ENCODE measurements at regions of chr7 and their contacts with region 1.

Region 1: GRCh38 chr7:5210751-5211338 is 20.8 kb downstream of the WIPI2 start:
- DNase-seq: no peak
- H3K4me3 ChIP-seq: no peak overlapping the region
- H3K27ac ChIP-seq: no peak overlapping the region
- H3K4me1 ChIP-seq: no peaks in the 10 kb centered on the region
- H3K27me3 ChIP-seq: no peaks in the 10 kb centered on the region
- CTCF ChIP-seq: no peak
- POLR2A ChIP-seq: no peak

Region 2: GRCh38 chr7:4386190-4386589 is 824.7 kb before region 1 on chr7:
- CTCF ChIA-PET with region 1: no interaction called
- POLR2A ChIA-PET with region 1: no interaction called
- dilution Hi-C with region 1: no loop called
- intact Hi-C with region 1: no loop called
- DNase-seq: no peak
- H3K4me3 ChIP-seq: no peak overlapping the region
- H3K27ac ChIP-seq: no peak overlapping the region
- H3K4me1 ChIP-seq: no peaks in the 10 kb centered on the region
- H3K27me3 ChIP-seq: no peaks in the 10 kb centered on the region
- CTCF ChIP-seq: no peak
- POLR2A ChIP-seq: no peak

Region 3: GRCh38 chr7:5193880-5194279 is 17.0 kb before region 1 on chr7:
- CTCF ChIA-PET with region 1: no interaction called
- POLR2A ChIA-PET with region 1: no interaction called
- dilution Hi-C with region 1: no loop called
- intact Hi-C with region 1: no loop called
- DNase-seq: no peak
- H3K4me3 ChIP-seq: no peak overlapping the region
- H3K27ac ChIP-seq: no peak overlapping the region
- H3K4me1 ChIP-seq: peaks cover 8% of the 10 kb centered on the region
- H3K27me3 ChIP-seq: no peaks in the 10 kb centered on the region
- CTCF ChIP-seq: no peak
- POLR2A ChIP-seq: no peak

Region 4: GRCh38 chr7:5314864-5315263 is 104.0 kb after region 1 on chr7:
- CTCF ChIA-PET with region 1: no interaction called
- POLR2A ChIA-PET with region 1: interaction called, 12 read pairs
- dilution Hi-C with region 1: no loop called
- intact Hi-C with region 1: no loop called
- DNase-seq: no peak
- H3K4me3 ChIP-seq: no peak overlapping the region
- H3K27ac ChIP-seq: no peak overlapping the region
- H3K4me1 ChIP-seq: no peaks in the 10 kb centered on the region
- H3K27me3 ChIP-seq: no peaks in the 10 kb centered on the region
- CTCF ChIP-seq: no peak
- POLR2A ChIP-seq: no peak

Region 5: DNA sequence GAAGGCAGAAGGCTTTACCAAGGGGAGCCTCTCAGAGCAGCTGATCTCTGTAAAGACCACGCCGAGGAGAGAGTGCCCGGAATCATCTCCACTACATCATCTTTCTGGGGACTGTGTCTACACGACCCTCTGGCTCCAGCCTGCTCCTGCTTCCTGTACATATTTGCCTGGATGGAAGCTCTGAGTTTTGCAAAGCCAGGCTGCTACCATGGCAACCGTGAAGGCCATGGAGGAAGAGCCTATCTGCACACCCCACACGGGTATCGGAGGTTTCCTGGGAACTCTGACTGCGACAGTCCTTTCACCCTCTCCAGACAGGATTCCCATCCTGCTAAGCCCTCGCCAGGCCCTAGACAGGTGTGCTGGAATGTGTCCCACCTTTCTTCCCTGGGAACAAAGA is 296.2 kb after region 1 on chr7:
- CTCF ChIA-PET with region 1: no interaction called
- POLR2A ChIA-PET with region 1: no interaction called
- dilution Hi-C with region 1: no loop called
- intact Hi-C with region 1: no loop called
- DNase-seq: no peak
- H3K4me3 ChIP-seq: no peak overlapping the region
- H3K27ac ChIP-seq: no peak overlapping the region
- H3K4me1 ChIP-seq: peaks cover 14% of the 10 kb centered on the region
- H3K27me3 ChIP-seq: no peaks in the 10 kb centered on the region
- CTCF ChIP-seq: no peak
- POLR2A ChIP-seq: no peak

Measured in endothelial cell of umbilical vein (primary cell).